ENCODE measurements at regions of chr11 and their contacts with region 1.

Region 1: GRCh38 chr11:85137597-85137996 is 489.5 kb downstream of the DLG2 start:
- DNase-seq: no peak
- ATAC-seq: no peak
- H3K4me3 ChIP-seq: no peak overlapping the region
- H3K4me3 Mint-ChIP-seq: no peak overlapping the region
- H3K27ac ChIP-seq: no peak overlapping the region
- H3K27ac Mint-ChIP-seq: no peak overlapping the region
- H3K4me1 ChIP-seq: no peaks in the 10 kb centered on the region
- H3K4me1 Mint-ChIP-seq: peaks cover 0 to 2% (median 0%) of the 10 kb centered on the region in 7 donors
- H3K27me3 ChIP-seq: no peaks in the 10 kb centered on the region
- H3K27me3 Mint-ChIP-seq: no peaks in the 10 kb centered on the region

Region 2: GRCh38 chr11:84465040-84465439 is 672.6 kb before region 1 on chr11:
- CTCF ChIA-PET with region 1: no interaction called
- POLR2A ChIA-PET with region 1: no interaction called
- intact Hi-C with region 1: no loop called
- DNase-seq: no peak
- ATAC-seq: no peak
- H3K4me3 ChIP-seq: no peak overlapping the region
- H3K4me3 Mint-ChIP-seq: no peak overlapping the region
- H3K27ac ChIP-seq: no peak overlapping the region
- H3K27ac Mint-ChIP-seq: no peak overlapping the region
- H3K4me1 ChIP-seq: no peaks in the 10 kb centered on the region
- H3K4me1 Mint-ChIP-seq: no peaks in the 10 kb centered on the region
- H3K27me3 ChIP-seq: no peaks in the 10 kb centered on the region
- H3K27me3 Mint-ChIP-seq: no peaks in the 10 kb centered on the region

Region 3: GRCh38 chr11:85196968-85197367 is 59.4 kb after region 1 on chr11:
- CTCF ChIA-PET with region 1: no interaction called
- POLR2A ChIA-PET with region 1: no interaction called
- intact Hi-C with region 1: loop called in 1 of 2 experiments (anchors 5 kb)
- DNase-seq: no peak
- ATAC-seq: no peak
- H3K4me3 ChIP-seq: no peak overlapping the region
- H3K4me3 Mint-ChIP-seq: no peak overlapping the region
- H3K27ac ChIP-seq: no peak overlapping the region
- H3K27ac Mint-ChIP-seq: no peak overlapping the region
- H3K4me1 ChIP-seq: no peaks in the 10 kb centered on the region
- H3K4me1 Mint-ChIP-seq: no peaks in the 10 kb centered on the region
- H3K27me3 ChIP-seq: no peaks in the 10 kb centered on the region
- H3K27me3 Mint-ChIP-seq: no peaks in the 10 kb centered on the region